ENCODE measurements at regions of chr2 and their contacts with region 1.

Region 1: GRCh38 chr2:104889291-104889959 is 35.5 kb downstream of the POU3F3 start:
- DNase-seq: peak in 1 of 2 donors; percentile 34
- H3K4me3 ChIP-seq: no peak overlapping the region
- H3K27ac ChIP-seq: no peak overlapping the region
- H3K4me1 ChIP-seq: no peaks in the 10 kb centered on the region
- H3K27me3 ChIP-seq: peaks cover 0 to 15% (median under 1%) of the 10 kb centered on the region in 3 donors
- CTCF ChIP-seq: no peak
- EP300 ChIP-seq: no peak
- POLR2A ChIP-seq: no peak

Region 2: GRCh38 chr2:104312686-104313085 is 576.7 kb before region 1 on chr2:
- intact Hi-C with region 1: no loop called
- DNase-seq: no peak
- H3K4me3 ChIP-seq: no peak overlapping the region
- H3K27ac ChIP-seq: no peak overlapping the region
- H3K4me1 ChIP-seq: no peaks in the 10 kb centered on the region
- H3K27me3 ChIP-seq: no peaks in the 10 kb centered on the region
- CTCF ChIP-seq: no peak
- EP300 ChIP-seq: no peak
- POLR2A ChIP-seq: no peak

Region 3: GRCh38 chr2:104388296-104388695 is 501.1 kb before region 1 on chr2:
- intact Hi-C with region 1: loop called (anchors 10 kb)
- DNase-seq: no peak
- H3K4me3 ChIP-seq: no peak overlapping the region
- H3K27ac ChIP-seq: no peak overlapping the region
- H3K4me1 ChIP-seq: no peaks in the 10 kb centered on the region
- H3K27me3 ChIP-seq: no peaks in the 10 kb centered on the region
- CTCF ChIP-seq: no peak
- EP300 ChIP-seq: no peak
- POLR2A ChIP-seq: no peak

Region 4: DNA sequence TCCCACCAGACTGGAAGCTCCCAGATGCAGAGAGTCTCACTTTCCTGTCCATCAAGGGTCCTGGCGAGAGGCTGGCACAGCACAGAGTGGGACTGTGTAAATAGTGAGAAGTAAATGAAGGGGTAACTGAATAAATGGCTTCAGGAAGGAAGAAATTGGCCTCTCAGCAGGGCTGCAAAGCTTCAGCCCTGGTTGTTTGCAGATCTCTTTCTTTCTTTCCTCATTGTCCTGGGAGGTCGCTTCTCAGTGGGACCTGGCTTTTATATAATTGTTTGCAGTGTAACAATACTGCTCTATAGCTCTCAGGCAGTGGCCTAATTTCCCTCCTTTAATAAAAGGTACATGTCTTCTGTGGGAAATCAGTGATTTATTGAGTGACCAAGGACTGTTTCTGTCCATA is 277.3 kb after region 1 on chr2:
- intact Hi-C with region 1: no loop called
- DNase-seq: no peak
- H3K4me3 ChIP-seq: no peak overlapping the region
- H3K27ac ChIP-seq: no peak overlapping the region
- H3K4me1 ChIP-seq: no peaks in the 10 kb centered on the region
- H3K27me3 ChIP-seq: peaks cover 0 to 8% (median 0%) of the 10 kb centered on the region in 3 donors
- CTCF ChIP-seq: no peak
- EP300 ChIP-seq: no peak
- POLR2A ChIP-seq: no peak

Measured in stomach (tissue), 19 donors.